PC-3 (cell line): ENCODE measurements at regions of chr20 and their contacts with region 1.

Region 1: GRCh38 chr20:45771182-45771759 is 20.4 kb downstream of the WFDC3 start:
- DNase-seq: peak; percentile 92
- ATAC-seq: peak; percentile 81
- H3K4me3 ChIP-seq: no peak overlapping the region
- H3K27ac ChIP-seq: no peak overlapping the region
- H3K4me1 ChIP-seq: peaks cover 4% of the 10 kb centered on the region
- H3K27me3 ChIP-seq: no peaks in the 10 kb centered on the region
- CTCF ChIP-seq: peak; percentile 99

Region 2: GRCh38 chr20:45322952-45323383 is 448.3 kb before region 1 on chr20:
- CTCF ChIA-PET with region 1: no interaction called
- POLR2A ChIA-PET with region 1: no interaction called
- intact Hi-C with region 1: loop called (anchors 2 kb)
- DNase-seq: peak; percentile 70
- ATAC-seq: peak; percentile 54
- H3K4me3 ChIP-seq: no peak overlapping the region
- H3K27ac ChIP-seq: no peak overlapping the region
- H3K4me1 ChIP-seq: peaks cover 9% of the 10 kb centered on the region
- H3K27me3 ChIP-seq: no peaks in the 10 kb centered on the region
- CTCF ChIP-seq: peak; percentile 63

Region 3: DNA sequence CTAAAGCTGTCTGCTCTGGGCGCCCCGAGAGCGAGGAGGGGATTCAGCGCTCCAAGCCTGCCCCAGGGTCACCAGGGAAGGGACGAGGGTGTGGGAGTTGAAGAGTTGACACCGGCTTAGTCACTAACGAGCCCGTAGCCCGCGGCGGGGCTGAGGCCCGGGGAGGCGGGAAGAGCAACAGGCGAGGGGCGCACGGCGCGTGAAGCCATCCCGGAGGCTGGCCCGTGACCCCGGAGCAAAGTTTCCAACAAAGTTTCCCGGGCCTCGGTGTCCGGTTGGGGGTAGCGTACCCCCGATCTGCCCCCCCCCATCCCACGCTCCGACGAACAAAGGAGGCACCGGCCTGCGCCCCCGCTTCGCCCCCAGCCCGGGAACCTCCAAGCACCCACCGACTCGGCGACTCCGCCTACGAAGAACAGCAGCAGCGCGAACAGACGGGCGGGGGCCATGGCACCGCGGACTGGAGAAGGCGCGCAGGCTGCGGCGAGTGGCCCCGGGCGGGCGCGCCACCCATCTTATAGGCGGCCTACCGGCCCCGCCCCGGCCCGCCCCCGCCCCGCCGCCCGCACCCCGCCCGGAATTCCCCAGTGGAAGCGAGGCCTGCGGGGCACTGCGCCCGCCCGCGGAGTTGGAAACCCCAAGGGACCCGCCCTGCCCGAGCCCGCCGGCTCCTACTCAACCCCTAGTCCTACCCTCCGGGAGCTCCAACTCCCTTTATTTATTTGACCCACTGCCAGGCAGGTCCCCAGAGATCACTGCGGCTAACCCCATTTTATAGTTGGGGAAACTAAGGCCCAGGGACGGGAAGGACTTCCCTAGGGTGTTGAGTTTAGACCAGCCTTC is 423.1 kb before region 1 on chr20 and contains the start of gene SDC4:
- CTCF ChIA-PET with region 1: no interaction called
- POLR2A ChIA-PET with region 1: no interaction called
- intact Hi-C with region 1: loop called (anchors 10 kb)
- DNase-seq: peak; percentile 71
- ATAC-seq: peak; percentile 20
- H3K4me3 ChIP-seq: peak within 1 kb of the TSS; percentile 97
- H3K27ac ChIP-seq: peak within 1 kb of the TSS; percentile 95
- H3K4me1 ChIP-seq: peaks cover 45% of the 10 kb centered on the region
- H3K27me3 ChIP-seq: no peaks in the 10 kb centered on the region
- CTCF ChIP-seq: no peak
- total RNA-seq, gene SDC4: 134 and 167 TPM in 2 replicates

Region 4: DNA sequence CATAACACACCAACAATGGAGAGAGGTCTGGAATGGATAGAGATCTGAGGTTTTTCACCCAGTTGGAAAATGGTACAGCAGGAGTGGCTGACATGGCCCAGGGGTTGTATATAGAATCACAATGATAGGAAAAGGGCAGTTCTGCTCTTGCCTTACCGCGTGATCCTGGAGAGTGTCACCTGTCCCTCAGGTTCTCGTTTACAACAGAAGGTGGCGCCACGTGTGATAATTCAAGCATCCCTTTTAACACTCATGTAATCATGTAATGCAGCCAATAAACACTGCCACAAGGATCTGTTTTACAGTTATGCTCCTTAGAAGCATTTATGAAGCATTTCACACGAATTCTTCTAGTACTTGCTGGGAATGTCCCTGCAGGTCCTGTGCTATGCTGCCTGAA is 314.6 kb before region 1 on chr20:
- CTCF ChIA-PET with region 1: interaction called, 7 read pairs
- POLR2A ChIA-PET with region 1: interaction called, 4 read pairs
- intact Hi-C with region 1: loop called (anchors 5 kb)
- DNase-seq: peak; percentile 63
- ATAC-seq: peak; percentile 54; the same call in 1 of the 2 replicates
- H3K4me3 ChIP-seq: no peak overlapping the region
- H3K27ac ChIP-seq: no peak overlapping the region
- H3K4me1 ChIP-seq: no peaks in the 10 kb centered on the region
- H3K27me3 ChIP-seq: no peaks in the 10 kb centered on the region
- CTCF ChIP-seq: peak; percentile 74

Region 5: GRCh38 chr20:45545754-45546453 is 225.4 kb before region 1 on chr20:
- CTCF ChIA-PET with region 1: interaction called, 4 read pairs
- POLR2A ChIA-PET with region 1: no interaction called
- intact Hi-C with region 1: loop called (anchors 1 kb)
- DNase-seq: peak; percentile 67
- ATAC-seq: peak; percentile 86
- H3K4me3 ChIP-seq: no peak overlapping the region
- H3K27ac ChIP-seq: no peak overlapping the region
- H3K4me1 ChIP-seq: no peaks in the 10 kb centered on the region
- H3K27me3 ChIP-seq: peaks cover 46% of the 10 kb centered on the region
- CTCF ChIP-seq: peak; percentile 76

Region 6: DNA sequence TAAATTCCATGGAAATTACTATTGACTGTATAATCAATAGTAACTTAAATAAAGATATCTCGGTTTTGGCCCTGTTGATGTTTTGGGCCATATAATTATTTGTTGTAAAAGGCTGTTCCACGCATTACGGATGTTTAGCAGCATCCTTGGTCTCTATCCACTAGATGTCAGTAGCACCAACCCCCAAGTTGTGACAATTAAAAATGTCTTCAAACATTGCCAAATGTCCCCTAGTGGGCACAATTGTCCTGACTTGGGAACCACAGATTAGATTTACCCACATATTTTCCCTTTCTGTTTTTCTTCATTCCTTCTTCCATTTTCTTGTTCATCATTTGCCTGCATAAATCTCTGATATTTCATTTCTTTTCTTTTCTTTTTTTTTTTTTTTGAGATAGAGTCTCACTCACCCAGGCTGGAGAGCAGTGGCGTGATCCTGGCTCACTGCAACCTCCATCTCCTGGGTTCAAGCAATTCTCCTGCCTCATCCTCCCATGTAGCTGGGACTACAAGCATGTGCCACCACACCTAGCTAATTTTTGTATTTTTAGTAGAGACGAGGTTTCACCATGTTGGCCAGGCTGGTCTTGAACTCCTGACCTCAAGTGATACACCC is 178.6 kb before region 1 on chr20:
- CTCF ChIA-PET with region 1: no interaction called
- POLR2A ChIA-PET with region 1: no interaction called
- intact Hi-C with region 1: loop called (anchors 1 kb)
- DNase-seq: peak; percentile 90
- ATAC-seq: peak; percentile 83
- H3K4me3 ChIP-seq: no peak overlapping the region
- H3K27ac ChIP-seq: no peak overlapping the region
- H3K4me1 ChIP-seq: no peaks in the 10 kb centered on the region
- H3K27me3 ChIP-seq: peaks cover 16% of the 10 kb centered on the region; the same call in 1 of the 2 replicates
- CTCF ChIP-seq: peak; percentile 97

Region 7: GRCh38 chr20:45629496-45630100 is 141.7 kb before region 1 on chr20 and contains the start of gene WFDC10A:
- CTCF ChIA-PET with region 1: interaction called, 11 read pairs
- POLR2A ChIA-PET with region 1: no interaction called
- intact Hi-C with region 1: loop called (anchors 10 kb)
- DNase-seq: peak; percentile 79
- ATAC-seq: peak; percentile 100
- H3K4me3 ChIP-seq: no peak within 1 kb of the TSS
- H3K27ac ChIP-seq: no peak within 1 kb of the TSS
- H3K4me1 ChIP-seq: no peaks in the 10 kb centered on the region
- H3K27me3 ChIP-seq: peaks cover 5% of the 10 kb centered on the region; the same call in 1 of the 2 replicates
- CTCF ChIP-seq: peak; percentile 80
- total RNA-seq, gene WFDC10A: not detected in 2 replicates

Region 8: GRCh38 chr20:45727044-45727443 is 44.2 kb before region 1 on chr20:
- CTCF ChIA-PET with region 1: no interaction called
- POLR2A ChIA-PET with region 1: no interaction called
- intact Hi-C with region 1: no loop called
- DNase-seq: no peak
- ATAC-seq: no peak
- H3K4me3 ChIP-seq: no peak overlapping the region
- H3K27ac ChIP-seq: no peak overlapping the region
- H3K4me1 ChIP-seq: no peaks in the 10 kb centered on the region
- H3K27me3 ChIP-seq: peaks cover 47% of the 10 kb centered on the region
- CTCF ChIP-seq: no peak